Activated CD8-positive, alpha-beta memory T cell treated with anti-CD3 and anti-CD28 coated beads, Interleukin-2, amount 10 ng/mL, durations not matched to agents 7 days and 5 days (primary cell): ENCODE measurements at regions of chr1 and their contacts with region 1.

Region 1: GRCh38 chr1:24973315-24973714 is 43.2 kb upstream of the RUNX3 start:
- DNase-seq: no peak
- ATAC-seq: no peak
- H3K4me3 Mint-ChIP-seq: no peak overlapping the region
- H3K27ac Mint-ChIP-seq: no peak overlapping the region
- H3K4me1 Mint-ChIP-seq: peaks cover 61% of the 10 kb centered on the region
- H3K27me3 Mint-ChIP-seq: no peaks in the 10 kb centered on the region

Region 2: GRCh38 chr1:24945354-24946313 is 27.7 kb before region 1 on chr1:
- CTCF ChIA-PET with region 1: no interaction called
- DNase-seq: no peak
- ATAC-seq: no peak
- H3K4me3 Mint-ChIP-seq: no peak overlapping the region
- H3K27ac Mint-ChIP-seq: peak overlapping the region; percentile 12
- H3K4me1 Mint-ChIP-seq: peaks cover 91% of the 10 kb centered on the region
- H3K27me3 Mint-ChIP-seq: no peaks in the 10 kb centered on the region

Region 3: GRCh38 chr1:24987875-24988557 is 14.7 kb after region 1 on chr1:
- CTCF ChIA-PET with region 1: interaction called, 108 read pairs
- DNase-seq: no peak
- ATAC-seq: no peak
- H3K4me3 Mint-ChIP-seq: no peak overlapping the region
- H3K27ac Mint-ChIP-seq: no peak overlapping the region
- H3K4me1 Mint-ChIP-seq: peaks cover 96% of the 10 kb centered on the region
- H3K27me3 Mint-ChIP-seq: no peaks in the 10 kb centered on the region

Region 4: GRCh38 chr1:25106352-25106751 is 133.0 kb after region 1 on chr1:
- CTCF ChIA-PET with region 1: no interaction called
- DNase-seq: peak; percentile 49
- ATAC-seq: peak; percentile 55
- H3K4me3 Mint-ChIP-seq: no peak overlapping the region
- H3K27ac Mint-ChIP-seq: no peak overlapping the region
- H3K4me1 Mint-ChIP-seq: peaks cover 35% of the 10 kb centered on the region
- H3K27me3 Mint-ChIP-seq: peaks cover 26% of the 10 kb centered on the region